Activated CD4-positive, alpha-beta memory T cell treated with anti-CD3 and anti-CD28 coated beads for 36 hours (primary cell): ENCODE measurements at regions of chr2 and their contacts with region 1.

Region 1: GRCh38 chr2:11129598-11130449 is 25.4 kb upstream of the SLC66A3 start:
- DNase-seq: peak; percentile 88
- H3K4me3 Mint-ChIP-seq: peak overlapping the region; percentile 62
- H3K27ac Mint-ChIP-seq: peak overlapping the region; percentile 33
- H3K4me1 Mint-ChIP-seq: peaks cover 28% of the 10 kb centered on the region
- H3K27me3 Mint-ChIP-seq: no peaks in the 10 kb centered on the region

Region 2: GRCh38 chr2:10504994-10505820 is 624.6 kb before region 1 on chr2:
- CTCF ChIA-PET with region 1: no interaction called
- POLR2A ChIA-PET with region 1: no interaction called
- intact Hi-C with region 1: no loop called
- DNase-seq: no peak
- H3K4me3 Mint-ChIP-seq: no peak overlapping the region
- H3K27ac Mint-ChIP-seq: no peak overlapping the region
- H3K4me1 Mint-ChIP-seq: no peaks in the 10 kb centered on the region
- H3K27me3 Mint-ChIP-seq: no peaks in the 10 kb centered on the region

Region 3: DNA sequence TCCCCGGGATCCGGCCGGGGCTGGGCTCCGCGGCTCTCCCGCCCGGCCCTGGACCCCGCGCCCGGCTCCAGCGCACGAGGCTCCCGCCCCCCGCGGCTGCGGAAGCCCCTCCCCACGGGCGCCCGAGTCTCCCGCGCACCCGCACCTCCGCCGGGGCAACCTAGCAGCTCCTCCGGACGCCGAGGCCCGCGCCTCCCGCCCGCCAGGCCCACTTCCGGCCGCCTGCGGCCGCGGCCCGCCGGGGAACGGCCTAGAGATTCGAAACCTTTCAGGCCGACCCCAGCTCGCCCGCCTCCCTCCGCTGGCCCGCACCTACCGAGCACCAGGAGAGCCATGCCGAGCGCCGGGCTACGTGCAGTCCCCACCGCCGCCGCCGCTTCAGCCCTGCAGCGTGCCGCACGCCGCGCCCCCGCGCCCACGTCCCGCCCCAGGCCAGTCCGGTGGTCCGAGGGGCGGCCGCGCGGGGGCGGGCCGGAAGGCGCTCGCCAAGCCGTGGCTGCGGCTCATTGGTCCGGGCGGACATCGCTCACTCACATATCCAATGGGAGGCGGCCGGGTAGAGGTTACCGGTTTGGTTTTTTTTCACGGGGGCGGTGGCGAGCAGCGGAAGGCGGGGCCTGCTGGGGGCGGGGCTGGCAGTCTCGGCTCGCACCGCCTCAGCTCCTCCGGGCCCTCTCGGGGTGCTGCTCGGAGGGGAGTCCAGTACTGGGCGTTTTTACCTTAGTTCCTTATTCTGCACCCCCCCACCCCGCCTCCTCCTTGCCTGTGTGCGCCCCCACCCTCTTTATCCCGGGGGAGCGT is 317.3 kb before region 1 on chr2 and contains the start of gene PDIA6:
- CTCF ChIA-PET with region 1: interaction called, 10 read pairs
- POLR2A ChIA-PET with region 1: interaction called, 4 read pairs
- intact Hi-C with region 1: loop called (anchors 5 kb)
- DNase-seq: peak; percentile 97
- H3K4me3 Mint-ChIP-seq: peak within 1 kb of the TSS; percentile 88
- H3K27ac Mint-ChIP-seq: peak within 1 kb of the TSS; percentile 90
- H3K4me1 Mint-ChIP-seq: peaks cover 34% of the 10 kb centered on the region
- H3K27me3 Mint-ChIP-seq: no peaks in the 10 kb centered on the region
- total RNA-seq, gene PDIA6: 176 to 181 TPM

Region 4: DNA sequence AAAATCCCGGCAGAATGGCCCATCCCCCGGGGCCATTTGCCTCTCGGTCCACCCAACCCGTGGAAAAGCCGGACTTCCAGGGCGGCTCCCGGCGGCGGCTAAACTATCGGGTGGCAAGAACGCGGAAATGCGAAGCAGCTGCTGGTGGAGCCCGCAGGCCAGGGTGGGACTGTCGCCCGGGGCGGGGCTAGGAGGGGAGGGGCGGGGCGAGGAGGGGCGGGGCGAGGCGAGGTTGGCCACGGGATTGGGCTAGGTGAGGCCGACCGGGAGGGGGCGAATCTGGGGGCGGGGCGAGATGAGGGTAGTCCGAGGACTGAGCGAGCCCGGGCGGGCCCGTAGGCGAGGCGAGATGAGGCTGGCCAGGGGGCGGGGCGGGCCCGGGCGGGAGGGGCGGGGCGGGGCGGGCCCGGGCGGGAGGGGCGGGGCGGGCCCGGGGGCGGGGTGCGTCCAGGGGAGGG is 25.1 kb after region 1 on chr2:
- CTCF ChIA-PET with region 1: interaction called, 15 read pairs
- POLR2A ChIA-PET with region 1: interaction called, 14 read pairs
- intact Hi-C with region 1: loop called (anchors 2 kb)
- DNase-seq: peak; percentile 99
- H3K4me3 Mint-ChIP-seq: peak overlapping the region; percentile 77
- H3K27ac Mint-ChIP-seq: peak overlapping the region; percentile 74
- H3K4me1 Mint-ChIP-seq: peaks cover 16% of the 10 kb centered on the region
- H3K27me3 Mint-ChIP-seq: no peaks in the 10 kb centered on the region

Region 5: DNA sequence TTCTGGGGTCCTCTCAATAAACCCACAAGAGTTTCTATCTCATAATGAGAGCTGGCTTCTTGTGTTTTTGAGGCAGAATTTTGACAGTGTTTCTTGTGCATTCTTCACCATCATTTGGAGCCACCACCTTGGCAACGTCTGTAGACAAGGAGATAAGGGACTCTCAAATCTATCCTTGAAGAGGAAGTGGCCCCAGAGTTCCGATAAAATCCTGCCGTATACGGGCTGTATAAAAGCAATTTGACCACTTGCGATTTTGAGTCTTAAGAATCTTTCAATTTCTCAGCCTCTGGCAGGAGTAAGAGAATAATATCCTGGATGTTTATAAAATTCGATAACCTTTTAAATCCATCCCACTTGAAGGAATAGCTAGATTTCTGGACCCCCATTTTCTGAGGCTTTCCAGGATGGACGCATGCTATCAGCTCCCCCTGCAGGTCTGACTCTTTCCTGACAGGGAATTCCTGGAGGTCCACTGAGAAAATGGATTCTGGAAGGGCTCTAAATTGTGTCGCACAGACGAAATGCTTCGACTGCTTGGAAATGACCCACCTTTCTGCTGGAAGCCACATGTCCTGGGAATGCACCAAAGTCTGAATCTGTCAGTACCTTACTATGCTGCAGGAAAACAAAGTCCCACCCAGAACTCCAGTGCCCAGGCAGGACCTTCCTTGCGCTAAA is 282.1 kb after region 1 on chr2:
- CTCF ChIA-PET with region 1: interaction called, 26 read pairs
- POLR2A ChIA-PET with region 1: no interaction called
- intact Hi-C with region 1: loop called (anchors 10 kb)
- DNase-seq: no peak
- H3K4me3 Mint-ChIP-seq: no peak overlapping the region
- H3K27ac Mint-ChIP-seq: no peak overlapping the region
- H3K4me1 Mint-ChIP-seq: no peaks in the 10 kb centered on the region
- H3K27me3 Mint-ChIP-seq: peaks cover 10% of the 10 kb centered on the region

Region 6: DNA sequence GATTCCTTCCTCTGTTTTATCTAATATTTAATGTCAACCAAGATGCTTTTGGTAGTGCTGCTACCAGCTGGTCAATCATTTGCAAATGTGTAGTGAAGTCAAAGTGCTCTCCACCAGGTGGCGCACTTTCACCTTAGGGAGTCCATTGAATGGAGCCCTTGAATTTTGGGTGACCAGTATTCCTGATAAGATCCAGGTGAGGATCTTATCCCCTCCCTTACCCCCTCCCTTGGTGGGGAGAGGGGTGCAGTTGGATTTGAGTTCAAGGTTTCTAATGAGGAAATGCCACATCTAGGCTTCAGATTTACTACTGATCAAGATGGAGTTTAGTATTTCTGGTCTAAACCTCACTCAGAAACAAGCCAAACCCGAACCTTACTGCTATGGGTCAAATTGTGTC is 348.2 kb after region 1 on chr2:
- CTCF ChIA-PET with region 1: interaction called, 6 read pairs
- POLR2A ChIA-PET with region 1: no interaction called
- intact Hi-C with region 1: loop called (anchors 5 kb)
- DNase-seq: peak; percentile 86
- H3K4me3 Mint-ChIP-seq: no peak overlapping the region
- H3K27ac Mint-ChIP-seq: no peak overlapping the region
- H3K4me1 Mint-ChIP-seq: peaks cover under 1% of the 10 kb centered on the region
- H3K27me3 Mint-ChIP-seq: peaks cover 21% of the 10 kb centered on the region